ENCODE measurements at regions of chr12 and their contacts with region 1.

Region 1: GRCh38 chr12:104201238-104202001 is 14.2 kb upstream of the TXNRD1 start:
- DNase-seq: no peak
- ATAC-seq: peak; percentile 78 to 80

Region 2: GRCh38 chr12:104358347-104359003 is 157.1 kb after region 1 on chr12:
- intact Hi-C with region 1: loop called (anchors 5 kb)
- DNase-seq: peak; percentile 53
- ATAC-seq: peak; percentile 62 to 66

Region 3: GRCh38 chr12:104877123-104877705 is 675.8 kb after region 1 on chr12:
- intact Hi-C with region 1: loop called in 1 of 2 experiments (anchors 10 kb)
- DNase-seq: no peak
- ATAC-seq: peak; percentile 72 to 92

Region 4: DNA sequence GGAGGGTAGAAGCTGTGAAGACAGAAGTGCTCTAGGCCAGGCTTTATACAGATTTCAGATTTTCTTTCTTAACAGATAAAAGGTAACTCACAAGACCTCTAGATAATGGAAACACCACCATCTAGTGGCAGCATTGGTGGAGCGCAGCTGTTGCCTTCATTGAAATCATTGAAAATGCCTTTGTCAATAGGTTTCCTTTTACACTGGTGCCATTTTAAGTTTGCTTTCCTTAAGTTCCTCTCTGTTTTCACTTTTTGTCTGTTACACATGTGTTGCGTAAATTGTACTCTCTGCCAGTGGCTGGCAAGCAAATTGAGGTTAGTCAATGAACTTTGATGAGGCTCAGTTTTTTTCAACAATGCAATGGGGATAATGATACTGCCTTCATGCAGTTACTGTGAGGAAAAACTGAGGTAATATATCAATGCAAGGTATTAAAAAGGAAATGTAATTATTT is 851.7 kb after region 1 on chr12:
- intact Hi-C with region 1: loop called in 1 of 2 experiments (anchors 10 kb)
- DNase-seq: peak; percentile 70
- ATAC-seq: peak; percentile 68 to 83

Region 5: GRCh38 chr12:105382771-105383622 is 1181.6 kb after region 1 on chr12:
- intact Hi-C with region 1: loop called in 1 of 2 experiments (anchors 5 kb)
- DNase-seq: peak; percentile 25
- ATAC-seq: peak; percentile 81 to 86

Measured in left cardiac atrium (tissue), 4 donors.